Testis (tissue), 5 donors: ENCODE measurements at regions of chr9 and their contacts with region 1.

Region 1: GRCh38 chr9:70111042-70111602 is 67.5 kb downstream of the MAMDC2 start:
- DNase-seq: peak; percentile 92
- H3K4me3 ChIP-seq: no peak overlapping the region
- H3K27ac ChIP-seq: peak overlapping the region in 1 of 2 donors; percentile 68
- H3K4me1 ChIP-seq: peaks cover 10% of the 10 kb centered on the region
- H3K27me3 ChIP-seq: no peaks in the 10 kb centered on the region
- CTCF ChIP-seq: peak; percentile 83 to 89 (median 85)
- POLR2A ChIP-seq: no peak

Region 2: DNA sequence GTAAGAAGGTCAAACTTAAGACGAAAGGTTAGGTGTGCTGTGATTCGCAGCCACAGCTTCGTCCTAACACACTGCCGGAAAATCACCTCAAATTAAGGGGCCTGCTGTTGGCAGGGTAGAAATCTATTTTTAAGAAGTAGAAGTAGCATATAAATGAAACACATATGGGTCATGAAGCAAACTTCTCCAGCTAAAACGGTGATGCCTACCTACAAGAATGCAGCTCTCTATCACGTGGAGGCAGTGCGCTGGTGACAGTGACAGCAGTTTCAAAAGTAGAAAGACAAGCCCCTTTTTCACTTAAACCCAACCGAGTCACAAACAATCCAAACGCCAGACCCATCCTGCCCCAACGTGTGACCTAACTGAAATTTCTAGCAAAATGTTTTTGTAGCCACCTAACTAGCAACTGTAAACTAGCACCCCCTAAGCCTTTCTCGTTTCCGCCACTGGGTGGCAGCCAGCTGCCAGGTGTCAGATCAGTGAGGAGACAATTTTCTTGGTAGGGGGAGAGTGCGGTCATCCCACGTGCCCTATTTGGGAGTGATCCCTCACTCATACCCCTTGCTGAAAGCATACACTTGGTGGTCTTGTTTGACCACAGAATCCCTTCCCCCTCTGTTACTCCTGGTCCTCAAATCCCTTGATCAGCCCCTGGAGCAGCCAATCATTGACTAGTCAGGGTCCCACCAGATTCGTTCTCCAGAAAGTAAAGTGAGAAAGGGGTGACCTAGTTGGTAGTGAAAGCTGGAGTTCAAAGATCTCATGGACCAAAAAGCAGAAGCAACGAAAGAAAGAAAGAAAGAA is 139.3 kb before region 1 on chr9:
- intact Hi-C with region 1: loop called (anchors 10 kb)
- DNase-seq: peak; percentile 87
- H3K4me3 ChIP-seq: no peak overlapping the region
- H3K27ac ChIP-seq: no peak overlapping the region
- H3K4me1 ChIP-seq: no peaks in the 10 kb centered on the region
- H3K27me3 ChIP-seq: no peaks in the 10 kb centered on the region
- CTCF ChIP-seq: peak; percentile 78 to 85 (median 79)
- POLR2A ChIP-seq: no peak